WTC11 (cell line): ENCODE measurements at regions of chr19 and their contacts with region 1.

Region 1: GRCh38 chr19:40165362-40165937 is 25.8 kb upstream of the MAP3K10 start:
- DNase-seq: peak; percentile 90
- ATAC-seq: peak; percentile 99
- H3K4me3 Mint-ChIP-seq: no peak overlapping the region
- H3K27ac Mint-ChIP-seq: 0 out of 2 replicates have a peak overlapping the region, but pooled peaks have one; percentile 78
- H3K4me1 Mint-ChIP-seq: peaks cover 4% of the 10 kb centered on the region
- H3K27me3 Mint-ChIP-seq: no peaks in the 10 kb centered on the region; the same call in 1 of the 2 replicates
- CTCF ChIP-seq: peak; percentile 79

Region 2: DNA sequence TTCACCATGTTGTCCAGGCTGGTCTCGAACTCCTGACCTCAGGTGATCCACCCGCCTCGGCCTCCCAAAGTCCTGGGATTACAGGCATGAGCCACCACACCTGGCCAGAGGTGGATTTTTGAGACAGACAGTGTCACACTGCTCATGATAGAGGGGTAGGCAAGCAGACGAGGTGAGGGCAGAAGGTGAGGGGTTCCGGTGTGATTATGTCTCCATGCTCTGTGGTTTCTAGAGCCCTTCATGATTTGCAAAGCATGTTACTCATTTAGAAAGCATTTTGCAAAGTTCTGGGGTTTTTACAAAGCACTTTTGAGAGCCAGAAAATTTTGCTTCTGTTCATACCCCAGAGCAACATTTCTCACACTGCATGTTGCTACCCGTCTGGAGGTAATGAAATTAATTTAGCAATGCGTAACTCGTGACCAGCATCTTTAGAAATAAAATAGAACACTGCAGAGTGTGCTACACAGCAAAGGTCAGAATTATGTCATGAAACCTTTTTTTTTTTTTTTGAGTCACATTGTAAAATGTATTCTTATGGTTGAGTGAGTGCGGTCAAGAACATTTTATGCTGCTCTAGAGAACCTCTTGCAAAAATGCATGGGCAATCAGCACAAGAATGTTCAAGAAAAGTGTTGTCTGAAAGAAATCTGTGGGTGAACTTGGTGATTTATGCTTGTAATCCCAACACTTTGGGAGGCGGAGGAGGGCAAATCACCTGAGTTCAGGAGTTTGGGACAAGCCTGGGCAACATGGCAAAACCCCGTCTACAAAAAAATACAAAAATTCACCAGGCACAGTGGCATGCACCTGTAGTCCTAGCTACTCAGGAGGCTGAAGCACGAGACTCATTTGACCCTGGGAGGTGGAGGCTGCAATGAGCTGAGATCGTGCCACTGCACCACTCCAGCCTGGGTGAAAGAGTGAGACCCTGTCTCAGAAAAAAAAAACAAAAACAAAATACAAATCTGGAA is 1605.7 kb before region 1 on chr19:
- CTCF ChIA-PET with region 1: no interaction called
- POLR2A ChIA-PET with region 1: interaction called, 12 read pairs
- DNase-seq: no peak
- ATAC-seq: no peak
- H3K4me3 Mint-ChIP-seq: no peak overlapping the region
- H3K27ac Mint-ChIP-seq: no peak overlapping the region; the same call in none of the 2 replicates
- H3K4me1 Mint-ChIP-seq: no peaks in the 10 kb centered on the region
- H3K27me3 Mint-ChIP-seq: no peaks in the 10 kb centered on the region
- CTCF ChIP-seq: no peak

Region 3: GRCh38 chr19:39970675-39971379 is 194.6 kb before region 1 on chr19 and contains the start of gene PSMC4:
- CTCF ChIA-PET with region 1: interaction called, 12 read pairs
- POLR2A ChIA-PET with region 1: no interaction called
- DNase-seq: peak; percentile 97
- ATAC-seq: peak; percentile 100
- H3K4me3 Mint-ChIP-seq: peak within 1 kb of the TSS; percentile 97
- H3K27ac Mint-ChIP-seq: peak within 1 kb of the TSS; percentile 96
- H3K4me1 Mint-ChIP-seq: peaks cover 25% of the 10 kb centered on the region
- H3K27me3 Mint-ChIP-seq: no peaks in the 10 kb centered on the region
- CTCF ChIP-seq: no peak
- total RNA-seq, gene PSMC4: 96.7 to 105 TPM (median 97.2 TPM) in 3 replicates

Region 4: GRCh38 chr19:40139533-40140287 is 25.7 kb before region 1 on chr19:
- CTCF ChIA-PET with region 1: interaction called, 44 read pairs
- POLR2A ChIA-PET with region 1: interaction called, 3 read pairs
- DNase-seq: no peak
- ATAC-seq: no peak; the same call in 1 of the 2 replicates
- H3K4me3 Mint-ChIP-seq: no peak overlapping the region
- H3K27ac Mint-ChIP-seq: no peak overlapping the region
- H3K4me1 Mint-ChIP-seq: 0 out of 2 replicates have a peak, but pooled peaks cover 5% of the 10 kb centered on the region
- H3K27me3 Mint-ChIP-seq: peaks cover 2% of the 10 kb centered on the region; the same call in 1 of the 2 replicates
- CTCF ChIP-seq: no peak

Region 5: GRCh38 chr19:40178756-40179155 is 13.3 kb after region 1 on chr19:
- CTCF ChIA-PET with region 1: interaction called, 44 read pairs
- POLR2A ChIA-PET with region 1: no interaction called
- DNase-seq: no peak
- ATAC-seq: no peak
- H3K4me3 Mint-ChIP-seq: no peak overlapping the region
- H3K27ac Mint-ChIP-seq: no peak overlapping the region
- H3K4me1 Mint-ChIP-seq: 0 out of 2 replicates have a peak, but pooled peaks cover 3% of the 10 kb centered on the region
- H3K27me3 Mint-ChIP-seq: no peaks in the 10 kb centered on the region; the same call in 1 of the 2 replicates
- CTCF ChIP-seq: no peak

Region 6: DNA sequence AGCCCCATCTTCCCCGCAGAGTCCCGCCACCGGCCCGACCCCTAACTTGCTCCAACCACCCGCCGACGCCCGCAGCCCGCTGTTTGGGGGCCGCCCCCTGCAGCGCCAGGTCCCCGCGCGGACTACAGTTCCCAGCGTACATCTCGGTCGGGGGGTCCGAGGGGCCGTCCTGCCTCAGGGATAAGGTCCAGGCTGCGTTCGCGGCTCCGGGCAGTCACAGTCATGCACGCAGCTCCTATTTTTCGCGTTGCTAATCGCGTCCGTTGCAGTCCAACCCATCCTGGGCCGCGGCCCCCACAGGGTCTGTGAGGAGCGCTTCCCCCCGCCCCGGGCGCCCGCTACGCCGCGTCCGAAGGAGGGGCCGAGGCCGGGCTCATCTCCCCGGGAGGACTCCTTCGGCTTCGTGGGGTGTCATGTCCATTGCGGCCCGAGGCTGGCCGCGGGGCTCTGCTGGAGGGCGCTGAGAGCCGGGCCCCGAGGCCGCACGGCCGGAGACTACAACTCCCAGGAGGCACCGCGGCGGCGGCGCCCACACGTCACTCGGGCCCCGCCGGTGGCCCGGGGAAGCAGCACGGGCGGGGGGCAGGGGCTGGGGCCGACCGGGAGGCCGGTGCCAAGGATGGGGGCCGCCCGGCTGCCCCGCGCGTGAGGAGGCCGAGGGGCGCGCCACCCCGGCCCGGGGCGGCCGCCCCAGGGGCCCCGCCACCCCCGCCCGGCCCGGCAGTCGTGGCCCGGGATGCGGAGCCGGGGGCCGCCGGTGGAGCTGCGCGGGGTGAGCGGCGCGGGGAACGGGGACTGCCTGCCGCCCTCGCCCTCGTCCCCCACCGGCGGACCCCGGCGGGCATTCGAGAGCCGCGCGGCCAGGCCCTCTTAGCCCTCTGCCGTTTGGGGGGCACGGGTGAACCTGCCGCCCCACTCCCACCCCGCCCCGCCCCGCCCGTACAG is 25.7 kb after region 1 on chr19 and contains the start of gene MAP3K10:
- CTCF ChIA-PET with region 1: interaction called, 15 read pairs
- POLR2A ChIA-PET with region 1: no interaction called
- DNase-seq: peak; percentile 68
- ATAC-seq: peak; percentile 74
- H3K4me3 Mint-ChIP-seq: peak within 1 kb of the TSS; percentile 78
- H3K27ac Mint-ChIP-seq: no peak within 1 kb of the TSS
- H3K4me1 Mint-ChIP-seq: peaks cover 18% of the 10 kb centered on the region
- H3K27me3 Mint-ChIP-seq: peaks cover 15% of the 10 kb centered on the region; the same call in 1 of the 2 replicates
- CTCF ChIP-seq: no peak
- total RNA-seq, gene MAP3K10: 23.5 to 25.5 TPM (median 24.4 TPM) in 3 replicates

Region 7: GRCh38 chr19:40425450-40426287 is 260.2 kb after region 1 on chr19 and contains the start of gene SERTAD1:
- CTCF ChIA-PET with region 1: no interaction called
- POLR2A ChIA-PET with region 1: no interaction called
- DNase-seq: peak; percentile 100
- ATAC-seq: peak; percentile 89
- H3K4me3 Mint-ChIP-seq: peak within 1 kb of the TSS; percentile 91
- H3K27ac Mint-ChIP-seq: peak within 1 kb of the TSS; percentile 97
- H3K4me1 Mint-ChIP-seq: peaks cover 16% of the 10 kb centered on the region
- H3K27me3 Mint-ChIP-seq: peaks cover 3% of the 10 kb centered on the region; the same call in 1 of the 2 replicates
- CTCF ChIP-seq: peak; percentile 80
- total RNA-seq, gene SERTAD1: 6.8 to 8.6 TPM (median 7.4 TPM) in 3 replicates